ENCODE measurements at regions of chr15 and their contacts with region 1.

Region 1: DNA sequence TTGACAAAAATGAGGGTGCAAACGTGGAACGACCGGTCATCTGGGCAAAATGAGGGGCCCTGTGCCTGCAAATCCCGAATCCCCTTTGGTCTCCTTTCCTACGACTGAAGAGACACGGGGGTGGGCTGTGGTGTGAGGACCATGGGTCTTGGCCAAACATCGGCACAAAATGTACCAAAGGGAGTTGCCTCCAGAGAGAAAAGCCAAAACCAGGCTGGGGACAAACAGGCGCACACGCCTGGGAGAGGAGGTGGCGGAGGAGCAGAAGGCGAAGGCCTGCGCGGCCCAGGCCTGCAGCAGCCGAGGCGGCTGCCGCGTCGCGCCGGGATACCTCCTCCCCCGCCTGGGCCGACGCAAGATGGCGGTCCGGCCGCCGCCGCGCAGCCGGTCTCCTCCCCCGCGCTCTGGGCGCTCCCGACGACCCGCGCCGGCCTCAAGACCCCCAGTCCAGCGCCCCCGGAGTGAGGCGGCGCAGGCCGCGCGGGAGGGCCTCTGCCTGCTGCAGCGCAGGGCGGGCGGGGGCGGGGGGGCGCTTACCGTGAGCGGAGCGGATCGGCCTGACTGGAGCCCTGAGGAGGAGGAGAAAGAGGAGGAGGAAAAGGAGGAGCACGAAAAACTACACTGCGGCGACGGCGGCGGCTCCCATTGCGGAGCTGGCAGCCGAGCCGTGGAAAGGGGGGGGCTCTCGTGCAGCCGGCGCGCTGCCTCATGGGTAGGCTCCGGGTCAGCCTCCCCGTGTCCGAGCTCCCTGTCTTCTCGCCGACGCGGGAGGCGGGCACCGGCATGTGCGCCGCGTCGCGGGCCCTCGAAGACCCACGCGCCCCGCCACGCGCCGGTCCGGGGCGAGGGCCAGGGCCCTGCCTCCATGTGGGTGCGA is at the start of gene ZNF280D:
- DNase-seq: peak; percentile 88
- ATAC-seq: peak; percentile 85
- H3K4me3 Mint-ChIP-seq: peak within 1 kb of the TSS; percentile 91
- H3K27ac Mint-ChIP-seq: peak within 1 kb of the TSS; percentile 98
- H3K4me1 Mint-ChIP-seq: peaks cover 32% of the 10 kb centered on the region
- H3K27me3 Mint-ChIP-seq: peaks cover 2% of the 10 kb centered on the region
- total RNA-seq, gene ZNF280D: 18.9 to 19.7 TPM

Region 2: DNA sequence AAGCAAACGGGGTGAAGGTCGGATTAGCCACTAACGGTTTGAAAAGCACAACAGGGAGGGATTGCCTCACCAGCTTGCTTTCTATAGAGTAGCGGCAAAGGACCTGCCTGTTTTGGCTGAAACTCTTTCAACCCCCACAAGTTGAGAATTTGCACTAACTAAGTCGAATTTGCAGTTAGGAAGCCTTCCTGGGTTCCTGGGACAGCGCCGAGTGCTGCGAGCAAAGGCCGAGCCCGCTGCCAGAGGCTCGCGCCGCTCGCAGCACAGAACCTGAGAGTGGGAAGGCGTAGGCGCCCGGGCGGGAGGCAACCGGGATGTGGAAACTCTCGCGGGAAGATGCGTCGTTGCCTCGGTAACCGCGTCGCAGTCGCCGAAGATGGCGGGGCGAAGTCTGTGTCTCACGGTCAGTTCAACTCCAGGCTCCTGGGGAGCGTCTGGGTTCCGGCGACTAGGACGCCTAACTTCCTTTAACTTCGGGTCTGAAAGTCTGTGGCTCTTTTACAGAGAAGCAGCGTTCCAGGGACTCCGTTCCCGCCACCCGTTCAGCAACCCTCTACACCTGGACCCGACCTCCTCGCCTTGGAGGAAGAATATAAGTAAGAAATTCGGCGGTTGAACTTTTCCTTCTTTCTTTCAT is 368.0 kb before region 1 on chr15 and contains the start of gene TEX9:
- CTCF ChIA-PET with region 1: no interaction called
- POLR2A ChIA-PET with region 1: no interaction called
- intact Hi-C with region 1: loop called in 1 of 2 experiments (anchors 10 kb)
- DNase-seq: peak; percentile 91
- ATAC-seq: peak; percentile 98
- H3K4me3 Mint-ChIP-seq: peak within 1 kb of the TSS; percentile 76
- H3K27ac Mint-ChIP-seq: peak within 1 kb of the TSS; percentile 42
- H3K4me1 Mint-ChIP-seq: peaks cover 13% of the 10 kb centered on the region
- H3K27me3 Mint-ChIP-seq: peaks cover 25% of the 10 kb centered on the region
- total RNA-seq, gene TEX9: 1.5 to 1.8 TPM

Region 3: GRCh38 chr15:56653787-56654186 is 79.4 kb before region 1 on chr15:
- CTCF ChIA-PET with region 1: no interaction called
- POLR2A ChIA-PET with region 1: no interaction called
- intact Hi-C with region 1: no loop called
- DNase-seq: no peak
- ATAC-seq: no peak
- H3K4me3 Mint-ChIP-seq: no peak overlapping the region
- H3K27ac Mint-ChIP-seq: no peak overlapping the region
- H3K4me1 Mint-ChIP-seq: no peaks in the 10 kb centered on the region
- H3K27me3 Mint-ChIP-seq: no peaks in the 10 kb centered on the region

Region 4: DNA sequence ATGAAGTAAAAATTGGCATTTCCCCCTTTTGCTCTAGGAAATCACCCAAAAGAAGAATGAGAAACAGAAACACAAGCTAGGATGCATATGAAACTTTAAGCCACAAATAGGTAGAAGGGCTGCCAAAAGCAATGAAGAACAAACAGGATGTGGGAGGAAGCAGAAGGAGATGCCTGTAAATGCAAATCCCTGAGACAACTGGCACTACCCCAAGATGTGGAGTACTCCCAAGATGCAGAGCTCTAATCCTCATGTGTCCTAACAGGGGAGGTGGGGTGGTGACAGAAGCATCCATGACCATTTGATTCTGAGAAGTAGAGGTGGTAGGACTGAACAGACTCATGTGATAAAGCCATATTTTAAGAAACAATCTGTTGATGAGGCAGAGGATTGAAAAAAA is 32.1 kb after region 1 on chr15:
- CTCF ChIA-PET with region 1: interaction called, 3 read pairs
- POLR2A ChIA-PET with region 1: no interaction called
- intact Hi-C with region 1: loop called in 1 of 2 experiments (anchors 1 kb)
- DNase-seq: no peak
- ATAC-seq: peak; percentile 43
- H3K4me3 Mint-ChIP-seq: no peak overlapping the region
- H3K27ac Mint-ChIP-seq: no peak overlapping the region
- H3K4me1 Mint-ChIP-seq: peaks cover 21% of the 10 kb centered on the region
- H3K27me3 Mint-ChIP-seq: no peaks in the 10 kb centered on the region

Region 5: GRCh38 chr15:56886932-56887781 is 154.0 kb after region 1 on chr15:
- CTCF ChIA-PET with region 1: no interaction called
- POLR2A ChIA-PET with region 1: no interaction called
- intact Hi-C with region 1: loop called in 1 of 2 experiments (anchors 1 kb)
- DNase-seq: peak; percentile 89
- ATAC-seq: peak; percentile 96
- H3K4me3 Mint-ChIP-seq: peak overlapping the region; percentile 71
- H3K27ac Mint-ChIP-seq: peak overlapping the region; percentile 86
- H3K4me1 Mint-ChIP-seq: peaks cover 20% of the 10 kb centered on the region
- H3K27me3 Mint-ChIP-seq: no peaks in the 10 kb centered on the region

Region 6: GRCh38 chr15:56984681-56985481 is 251.7 kb after region 1 on chr15:
- CTCF ChIA-PET with region 1: no interaction called
- POLR2A ChIA-PET with region 1: no interaction called
- intact Hi-C with region 1: loop called in 1 of 2 experiments (anchors 10 kb)
- DNase-seq: no peak
- ATAC-seq: peak; percentile 31
- H3K4me3 Mint-ChIP-seq: no peak overlapping the region
- H3K27ac Mint-ChIP-seq: no peak overlapping the region
- H3K4me1 Mint-ChIP-seq: peaks cover 60% of the 10 kb centered on the region
- H3K27me3 Mint-ChIP-seq: no peaks in the 10 kb centered on the region